ENCODE measurements at regions of chr12 and their contacts with region 1.

Region 1: DNA sequence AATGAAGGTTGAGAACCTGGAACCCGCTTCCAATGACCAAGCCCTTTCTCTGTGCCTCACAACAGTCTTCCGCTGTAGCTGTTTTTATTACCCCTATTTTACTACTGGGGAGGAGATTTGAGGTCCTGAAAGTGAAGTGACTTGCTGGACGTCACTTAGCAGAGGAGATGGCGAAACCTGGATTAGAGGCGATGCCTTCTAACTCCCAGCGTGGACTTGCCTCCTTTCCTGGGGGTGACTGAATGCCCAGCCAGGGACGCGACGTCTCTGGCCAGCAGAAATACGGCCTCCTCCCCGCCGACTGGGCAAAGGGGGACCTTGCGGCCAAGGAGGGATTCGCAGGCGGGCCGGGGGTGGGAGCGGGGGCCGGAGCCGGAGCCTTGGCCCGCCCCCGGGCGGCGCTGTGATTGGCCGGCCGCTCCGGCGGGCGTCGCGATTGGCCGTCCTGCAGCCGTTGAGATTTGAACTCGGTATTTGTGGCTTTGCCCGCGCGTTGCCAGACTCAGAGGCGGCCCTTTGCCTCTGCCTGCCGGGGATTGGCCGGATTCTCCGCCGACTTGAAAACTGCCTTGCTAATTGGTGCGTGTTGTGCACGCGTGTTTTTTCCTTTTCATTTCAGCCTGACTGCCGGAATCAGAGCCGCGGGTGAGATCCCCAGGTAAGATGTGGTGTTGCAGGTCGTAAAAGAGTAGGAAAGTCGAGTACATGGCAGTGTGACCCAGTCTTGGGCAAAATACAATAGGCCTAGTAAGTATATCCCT is at the start of gene NCAPD2:
- DNase-seq: peak; percentile 96
- H3K4me3 Mint-ChIP-seq: peak within 1 kb of the TSS; percentile 97
- H3K27ac Mint-ChIP-seq: peak within 1 kb of the TSS; percentile 97
- H3K4me1 Mint-ChIP-seq: peaks cover 33% of the 10 kb centered on the region
- H3K27me3 Mint-ChIP-seq: peaks cover 3% of the 10 kb centered on the region
- total RNA-seq, gene NCAPD2: 91.6 and 93.4 TPM in 2 replicates

Region 2: GRCh38 chr12:6423267-6424007 is 70.2 kb before region 1 on chr12:
- intact Hi-C with region 1: loop called (anchors 1 kb)
- DNase-seq: peak; percentile 75
- H3K4me3 Mint-ChIP-seq: no peak overlapping the region
- H3K27ac Mint-ChIP-seq: peak overlapping the region; percentile 50
- H3K4me1 Mint-ChIP-seq: peaks cover 44% of the 10 kb centered on the region
- H3K27me3 Mint-ChIP-seq: peaks cover 1% of the 10 kb centered on the region

Region 3: GRCh38 chr12:6533923-6534694 is 40.4 kb after region 1 on chr12 and contains the start of gene GAPDH:
- intact Hi-C with region 1: loop called (anchors 1 kb)
- DNase-seq: peak; percentile 86
- H3K4me3 Mint-ChIP-seq: peak within 1 kb of the TSS; percentile 91
- H3K27ac Mint-ChIP-seq: peak within 1 kb of the TSS; percentile 99
- H3K4me1 Mint-ChIP-seq: peaks cover 58% of the 10 kb centered on the region
- H3K27me3 Mint-ChIP-seq: no peaks in the 10 kb centered on the region
- total RNA-seq, gene GAPDH: 4,315 and 4,318 TPM in 2 replicates

Region 4: DNA sequence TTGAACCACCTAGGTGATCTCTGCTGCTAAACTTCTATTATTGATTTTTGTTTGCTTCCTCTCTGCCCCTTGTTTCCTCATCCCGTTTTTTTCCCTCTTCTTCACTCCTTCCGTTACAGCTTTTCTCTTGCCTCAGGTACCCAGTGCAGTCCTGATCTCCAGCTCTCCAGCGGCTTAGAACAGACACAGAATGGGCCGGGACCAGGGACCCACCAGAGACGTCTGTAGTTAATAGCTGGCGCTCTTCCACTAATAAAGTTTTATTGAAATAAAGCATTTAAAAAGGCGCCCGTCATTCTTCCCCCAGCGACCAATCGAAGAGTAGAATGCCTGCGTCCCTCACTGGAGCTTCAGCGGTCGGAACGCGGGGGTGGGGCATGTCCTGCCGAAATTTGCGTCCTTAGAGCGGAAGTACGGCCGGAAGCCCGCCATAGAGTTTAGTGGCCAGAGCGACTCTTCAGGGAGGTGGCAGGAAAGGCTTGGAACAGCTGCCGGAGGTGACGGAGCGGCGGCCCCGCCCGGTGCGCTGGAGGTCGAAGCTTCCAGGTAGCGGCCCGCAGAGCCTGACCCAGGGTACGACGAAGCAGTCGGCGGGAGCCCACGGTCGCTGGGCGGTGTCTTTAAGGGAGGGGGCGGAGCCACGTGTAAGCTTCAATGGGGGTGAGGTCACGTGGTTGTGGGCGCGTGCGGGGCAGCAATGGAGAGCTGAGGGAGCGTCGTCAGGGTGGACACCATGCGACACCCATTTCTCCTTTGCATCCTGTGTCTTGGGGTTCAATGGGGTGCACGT is 230.1 kb after region 1 on chr12 and contains the start of gene COPS7A:
- intact Hi-C with region 1: loop called (anchors 2 kb)
- DNase-seq: peak; percentile 98
- H3K4me3 Mint-ChIP-seq: peak within 1 kb of the TSS; percentile 92
- H3K27ac Mint-ChIP-seq: peak within 1 kb of the TSS; percentile 91
- H3K4me1 Mint-ChIP-seq: peaks cover 33% of the 10 kb centered on the region
- H3K27me3 Mint-ChIP-seq: no peaks in the 10 kb centered on the region
- total RNA-seq, gene COPS7A: 34.6 and 36.2 TPM in 2 replicates

Region 5: DNA sequence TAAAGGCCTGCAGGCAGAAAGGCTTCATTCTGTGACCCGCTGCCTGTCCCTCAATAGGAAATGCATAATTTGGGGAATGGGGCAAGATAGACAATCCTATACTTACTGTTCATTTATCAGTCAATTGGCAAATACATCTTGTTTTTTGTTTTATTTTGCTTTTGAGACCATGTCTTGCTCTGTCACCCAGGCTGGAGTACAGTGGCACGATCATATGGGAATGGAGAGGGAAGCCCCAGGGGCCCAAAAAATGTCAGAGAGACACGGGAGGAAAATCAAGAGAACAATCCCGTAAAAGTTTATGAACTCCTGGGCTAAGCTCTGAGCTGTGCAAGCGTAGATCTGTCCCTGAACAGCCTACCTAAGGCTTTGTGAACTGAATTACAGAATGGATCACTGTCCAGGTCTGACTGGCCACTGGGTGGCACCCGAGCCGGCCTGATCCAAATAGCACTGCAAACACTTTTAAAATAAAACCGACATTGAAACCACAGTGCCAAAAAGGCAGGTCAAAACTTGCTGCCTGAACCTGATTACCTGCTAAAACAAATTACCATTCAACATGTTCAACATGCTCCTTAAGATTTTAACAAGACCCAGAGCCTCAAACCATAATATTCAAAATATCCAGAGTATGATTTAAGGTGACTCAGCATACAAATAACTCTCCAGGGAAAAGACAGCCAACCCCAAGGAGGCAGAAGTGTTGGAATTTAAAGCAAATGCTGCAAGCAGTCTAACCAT is 241.9 kb after region 1 on chr12:
- intact Hi-C with region 1: no loop called
- DNase-seq: peak; percentile 20
- H3K4me3 Mint-ChIP-seq: no peak overlapping the region
- H3K27ac Mint-ChIP-seq: no peak overlapping the region
- H3K4me1 Mint-ChIP-seq: peaks cover 5% of the 10 kb centered on the region
- H3K27me3 Mint-ChIP-seq: no peaks in the 10 kb centered on the region

Region 6: DNA sequence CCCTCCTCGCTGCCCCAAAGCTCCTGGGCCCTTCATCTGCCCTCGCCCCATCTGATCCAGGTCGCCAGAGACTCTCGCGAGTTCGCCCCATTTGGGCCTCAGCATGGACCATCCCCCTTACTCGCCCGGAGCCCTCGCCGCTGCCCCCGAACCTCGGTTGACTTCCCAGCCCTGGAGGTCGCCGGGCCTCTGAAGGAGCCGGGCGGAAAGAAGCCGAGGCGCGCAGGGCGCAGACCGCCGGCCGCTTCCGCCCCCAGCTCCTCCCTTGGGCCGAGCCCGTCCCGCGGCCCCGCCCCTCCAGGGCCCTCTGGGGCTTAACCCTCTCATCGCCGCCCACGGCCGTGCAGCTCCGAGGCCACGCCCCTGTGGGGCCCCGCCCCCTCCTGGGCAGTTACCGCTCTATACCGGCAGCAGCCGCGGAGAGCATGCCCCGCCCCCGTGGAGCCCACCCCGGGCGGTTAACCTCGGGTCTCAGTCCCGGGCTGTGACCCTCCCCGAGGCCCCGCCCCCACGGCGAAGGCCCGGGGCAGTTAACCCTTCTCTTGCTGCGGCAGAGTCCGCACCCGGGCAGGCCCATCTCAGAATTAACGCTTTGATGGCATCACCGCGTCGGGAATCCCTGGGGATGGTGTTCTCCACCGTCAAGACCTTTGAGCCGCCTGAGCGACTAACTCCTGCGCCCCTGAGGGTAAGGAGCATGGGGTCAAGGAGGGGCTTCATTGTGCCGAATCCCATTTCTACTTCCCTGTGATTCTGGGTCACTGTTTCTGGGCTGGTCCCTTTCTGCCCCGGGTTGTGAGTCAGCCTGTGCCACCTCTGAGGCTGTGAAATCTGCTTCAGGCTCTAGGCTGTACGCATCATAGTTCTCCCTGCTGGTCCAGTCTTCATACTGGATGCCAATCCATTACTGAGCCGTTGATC is 379.7 kb after region 1 on chr12 and contains the start of gene SPSB2:
- intact Hi-C with region 1: loop called (anchors 5 kb)
- DNase-seq: peak; percentile 99
- H3K4me3 Mint-ChIP-seq: peak within 1 kb of the TSS; percentile 96
- H3K27ac Mint-ChIP-seq: peak within 1 kb of the TSS; percentile 86
- H3K4me1 Mint-ChIP-seq: peaks cover 56% of the 10 kb centered on the region
- H3K27me3 Mint-ChIP-seq: no peaks in the 10 kb centered on the region
- total RNA-seq, gene SPSB2: 3.4 and 4.7 TPM in 2 replicates

Region 7: GRCh38 chr12:7129872-7130680 is 636.4 kb after region 1 on chr12 and contains the start of gene CLSTN3:
- intact Hi-C with region 1: loop called (anchors 5 kb)
- DNase-seq: peak; percentile 84
- H3K4me3 Mint-ChIP-seq: peak within 1 kb of the TSS; percentile 96
- H3K27ac Mint-ChIP-seq: peak within 1 kb of the TSS; percentile 91
- H3K4me1 Mint-ChIP-seq: peaks cover 37% of the 10 kb centered on the region
- H3K27me3 Mint-ChIP-seq: no peaks in the 10 kb centered on the region
- total RNA-seq, gene CLSTN3: 48.5 and 50.8 TPM in 2 replicates